ENCODE measurements at regions of chr11 and their contacts with region 1.

Region 1: GRCh38 chr11:73335204-73335923 is 27.3 kb downstream of the ARHGEF17 start:
- DNase-seq: peak; percentile 78
- ATAC-seq: peak; percentile 89
- H3K4me3 Mint-ChIP-seq: no peak overlapping the region
- H3K27ac Mint-ChIP-seq: no peak overlapping the region
- H3K4me1 Mint-ChIP-seq: no peaks in the 10 kb centered on the region
- H3K27me3 Mint-ChIP-seq: no peaks in the 10 kb centered on the region
- CTCF ChIP-seq: peak; percentile 85

Region 2: GRCh38 chr11:73295231-73295995 is 40.0 kb before region 1 on chr11:
- CTCF ChIA-PET with region 1: interaction called, 27 read pairs
- POLR2A ChIA-PET with region 1: interaction called, 7 read pairs
- intact Hi-C with region 1: loop called (anchors 1 kb)
- DNase-seq: peak; percentile 68
- ATAC-seq: peak; percentile 91
- H3K4me3 Mint-ChIP-seq: no peak overlapping the region
- H3K27ac Mint-ChIP-seq: no peak overlapping the region
- H3K4me1 Mint-ChIP-seq: peaks cover 6% of the 10 kb centered on the region
- H3K27me3 Mint-ChIP-seq: peaks cover 10% of the 10 kb centered on the region
- CTCF ChIP-seq: peak; percentile 85

Region 3: DNA sequence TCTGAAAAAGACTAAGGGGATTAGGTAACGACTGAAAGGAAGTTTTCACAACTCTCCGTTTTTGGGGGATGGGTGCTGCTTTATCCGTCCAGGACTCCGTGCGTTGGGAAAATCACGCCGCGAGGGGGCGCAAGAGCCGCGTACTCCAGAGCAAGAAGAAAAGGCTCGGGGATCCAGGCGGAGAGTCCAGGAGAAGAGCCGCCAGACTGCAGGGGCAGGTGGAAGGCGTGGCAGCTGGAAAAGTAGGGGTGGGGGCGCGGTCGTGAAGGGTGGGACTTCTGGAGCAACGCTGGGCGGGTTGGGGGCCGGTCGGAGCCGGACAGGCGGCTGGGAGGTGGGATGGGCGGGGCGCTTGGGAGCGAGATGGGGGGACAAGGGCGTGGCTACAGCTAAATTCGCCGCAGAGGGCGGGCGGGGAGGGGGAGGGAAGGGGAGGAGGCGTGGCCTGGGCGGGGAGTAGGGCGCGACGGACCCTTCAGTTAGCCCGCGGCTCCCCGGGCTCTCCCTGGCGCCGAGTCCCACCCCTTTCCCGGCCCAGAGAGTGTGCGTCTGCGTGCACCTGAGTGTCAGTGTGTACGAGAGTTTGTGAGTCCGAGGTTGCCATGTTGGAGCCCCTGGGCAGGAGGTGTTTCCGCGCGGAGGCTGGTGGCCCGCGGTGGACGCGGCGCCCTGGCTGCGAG is 27.9 kb before region 1 on chr11:
- CTCF ChIA-PET with region 1: interaction called, 63 read pairs
- POLR2A ChIA-PET with region 1: interaction called, 7 read pairs
- intact Hi-C with region 1: loop called (anchors 1 kb)
- DNase-seq: peak; percentile 85
- ATAC-seq: peak; percentile 73
- H3K4me3 Mint-ChIP-seq: peak overlapping the region; percentile 93
- H3K27ac Mint-ChIP-seq: no peak overlapping the region
- H3K4me1 Mint-ChIP-seq: peaks cover 11% of the 10 kb centered on the region
- H3K27me3 Mint-ChIP-seq: peaks cover 8% of the 10 kb centered on the region
- CTCF ChIP-seq: no peak

Region 4: DNA sequence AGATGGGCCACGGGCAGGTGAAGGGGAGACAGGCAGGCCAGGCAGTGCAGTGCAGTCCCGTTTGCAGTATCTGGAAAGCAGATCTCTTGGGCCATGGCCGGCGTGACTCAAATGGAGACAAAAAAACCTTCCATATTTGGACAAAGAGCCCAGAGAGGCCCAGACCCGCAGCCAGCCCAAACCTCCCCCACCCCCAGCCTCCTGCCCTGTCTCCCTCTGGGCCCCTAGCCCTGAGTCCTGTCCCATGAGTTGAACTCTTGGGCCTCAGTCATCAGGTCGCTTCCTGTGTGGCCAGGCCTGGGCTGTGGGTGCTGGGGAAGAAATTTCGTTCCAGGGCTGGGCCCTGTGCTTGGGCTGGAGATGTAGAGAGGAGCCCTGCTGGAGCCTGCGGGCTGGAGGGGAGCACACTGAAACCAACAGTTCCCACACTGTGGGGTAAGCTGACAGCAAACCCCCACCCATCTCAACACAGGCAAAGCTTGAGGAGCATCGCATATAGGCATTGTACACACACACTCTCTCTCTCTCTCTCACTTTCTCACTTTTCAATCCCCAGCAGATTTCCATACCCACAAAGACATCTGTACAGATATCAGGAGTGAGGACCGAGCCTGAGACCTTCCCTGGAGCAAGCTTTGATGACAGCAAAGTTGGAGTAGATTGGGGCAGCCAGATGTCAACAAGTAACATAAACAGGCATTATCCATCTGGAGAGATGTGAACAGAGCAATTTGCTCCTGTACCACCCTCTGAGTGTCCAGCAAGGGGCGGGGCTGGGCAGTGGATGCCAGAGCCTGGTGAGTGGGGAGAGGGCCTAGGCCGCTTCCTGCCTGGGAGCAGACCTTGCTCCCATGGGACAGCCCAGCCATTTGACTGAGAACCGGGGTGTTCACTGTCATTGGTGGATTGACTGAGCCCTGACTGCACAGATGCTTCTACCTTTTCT is 10.1 kb before region 1 on chr11:
- CTCF ChIA-PET with region 1: interaction called, 10 read pairs
- POLR2A ChIA-PET with region 1: no interaction called
- intact Hi-C with region 1: no loop called
- DNase-seq: no peak
- ATAC-seq: no peak
- H3K4me3 Mint-ChIP-seq: no peak overlapping the region
- H3K27ac Mint-ChIP-seq: no peak overlapping the region
- H3K4me1 Mint-ChIP-seq: peaks cover 35% of the 10 kb centered on the region
- H3K27me3 Mint-ChIP-seq: no peaks in the 10 kb centered on the region
- CTCF ChIP-seq: no peak

Measured in activated B cell treated with CpG ODN at 0.5 μM for 24 hours (primary cell).